PC-3 (cell line): ENCODE measurements at regions of chr3 and their contacts with region 1.

Region 1: GRCh38 chr3:85360742-85361387 is 402.1 kb downstream of the CADM2 start:
- DNase-seq: peak; percentile 83
- ATAC-seq: peak; percentile 100
- H3K4me3 ChIP-seq: no peak overlapping the region
- H3K27ac ChIP-seq: no peak overlapping the region
- H3K4me1 ChIP-seq: no peaks in the 10 kb centered on the region
- H3K27me3 ChIP-seq: no peaks in the 10 kb centered on the region
- CTCF ChIP-seq: peak; percentile 94

Region 2: GRCh38 chr3:84555629-84556028 is 805.2 kb before region 1 on chr3:
- CTCF ChIA-PET with region 1: no interaction called
- POLR2A ChIA-PET with region 1: no interaction called
- intact Hi-C with region 1: loop called (anchors 2 kb)
- DNase-seq: no peak
- ATAC-seq: no peak
- H3K4me3 ChIP-seq: no peak overlapping the region
- H3K27ac ChIP-seq: no peak overlapping the region
- H3K4me1 ChIP-seq: no peaks in the 10 kb centered on the region
- H3K27me3 ChIP-seq: no peaks in the 10 kb centered on the region
- CTCF ChIP-seq: no peak

Region 3: DNA sequence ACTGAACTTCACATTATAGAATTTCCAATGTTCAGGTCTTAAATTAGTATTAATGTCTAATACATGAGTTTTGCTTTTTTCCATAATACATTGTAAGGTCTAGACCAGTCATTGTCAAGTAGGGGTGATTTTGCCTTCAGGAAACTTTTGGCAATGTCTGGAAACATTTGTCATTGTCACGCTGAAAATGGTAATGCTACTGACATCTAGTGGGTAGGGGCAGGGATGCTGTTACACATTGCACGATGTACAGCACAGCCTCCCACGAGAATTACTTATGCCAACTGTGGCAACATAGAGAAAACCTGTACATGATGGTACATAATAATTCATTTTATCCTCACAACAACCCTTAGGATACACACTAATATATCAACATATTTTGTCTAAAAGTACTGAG is 17.9 kb before region 1 on chr3:
- CTCF ChIA-PET with region 1: no interaction called
- POLR2A ChIA-PET with region 1: no interaction called
- intact Hi-C with region 1: no loop called
- DNase-seq: peak; percentile 69
- ATAC-seq: peak; percentile 87
- H3K4me3 ChIP-seq: no peak overlapping the region
- H3K27ac ChIP-seq: no peak overlapping the region
- H3K4me1 ChIP-seq: peaks cover 13% of the 10 kb centered on the region
- H3K27me3 ChIP-seq: no peaks in the 10 kb centered on the region
- CTCF ChIP-seq: peak; percentile 87

Region 4: GRCh38 chr3:85801955-85802354 is 441.1 kb after region 1 on chr3:
- CTCF ChIA-PET with region 1: no interaction called
- POLR2A ChIA-PET with region 1: no interaction called
- intact Hi-C with region 1: loop called (anchors 1 kb)
- DNase-seq: peak; percentile 80
- ATAC-seq: peak; percentile 95
- H3K4me3 ChIP-seq: no peak overlapping the region
- H3K27ac ChIP-seq: no peak overlapping the region
- H3K4me1 ChIP-seq: no peaks in the 10 kb centered on the region; the same call in 1 of the 2 replicates
- H3K27me3 ChIP-seq: no peaks in the 10 kb centered on the region
- CTCF ChIP-seq: peak; percentile 91